Activated CD4-positive, alpha-beta T cell treated with anti-CD3 and anti-CD28 coated beads for 36 hours (primary cell): ENCODE measurements at regions of chr22 and their contacts with region 1.

Region 1: DNA sequence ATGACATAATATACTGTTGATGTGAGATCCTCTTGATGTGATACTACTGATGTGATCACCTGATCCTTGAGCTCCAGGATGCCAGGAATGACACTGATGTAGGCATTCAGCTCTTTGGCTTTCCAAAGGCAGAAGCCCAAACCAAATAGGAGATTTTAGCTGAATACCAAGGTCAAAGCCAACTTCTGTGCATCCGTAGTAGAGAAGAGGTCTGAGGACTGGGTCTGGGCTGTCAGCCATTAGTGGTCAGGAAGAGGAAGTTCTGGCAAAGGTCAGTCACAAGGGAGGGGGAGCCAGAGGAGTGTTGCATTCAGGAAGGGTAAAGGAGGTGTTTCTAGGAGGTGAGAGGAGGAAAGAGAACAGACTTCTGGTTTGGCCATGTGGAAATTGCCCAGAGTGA is 53.4 kb upstream of the PARVG start:
- DNase-seq: no peak
- ATAC-seq: no peak
- H3K4me3 Mint-ChIP-seq: no peak overlapping the region
- H3K27ac Mint-ChIP-seq: no peak overlapping the region
- H3K4me1 Mint-ChIP-seq: no peaks in the 10 kb centered on the region
- H3K27me3 Mint-ChIP-seq: peaks cover 2% of the 10 kb centered on the region

Region 2: DNA sequence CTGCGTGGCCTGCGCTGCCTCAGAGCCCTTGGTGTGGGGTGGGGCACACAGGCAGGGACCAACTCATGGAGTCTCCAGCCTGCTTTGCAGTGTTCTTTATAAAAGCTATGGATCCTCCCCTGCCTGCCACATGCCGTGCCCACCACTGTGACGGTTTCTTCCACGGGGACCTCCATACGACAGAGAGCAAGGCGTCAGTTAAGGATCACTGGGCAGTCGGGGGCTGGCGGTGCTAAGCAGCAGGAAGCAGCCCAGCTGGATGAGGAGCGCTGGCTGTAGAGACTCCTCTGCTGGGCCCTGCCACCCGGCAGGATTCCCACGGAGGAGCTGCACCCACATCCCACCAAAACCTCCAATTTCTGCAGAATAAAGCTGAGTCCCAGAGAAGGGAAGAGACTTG is 292.2 kb before region 1 on chr22:
- CTCF ChIA-PET with region 1: no interaction called
- POLR2A ChIA-PET with region 1: interaction called, 11 read pairs
- intact Hi-C with region 1: no loop called
- DNase-seq: no peak
- ATAC-seq: no peak
- H3K4me3 Mint-ChIP-seq: no peak overlapping the region
- H3K27ac Mint-ChIP-seq: no peak overlapping the region
- H3K4me1 Mint-ChIP-seq: no peaks in the 10 kb centered on the region
- H3K27me3 Mint-ChIP-seq: peaks cover 2% of the 10 kb centered on the region

Region 3: DNA sequence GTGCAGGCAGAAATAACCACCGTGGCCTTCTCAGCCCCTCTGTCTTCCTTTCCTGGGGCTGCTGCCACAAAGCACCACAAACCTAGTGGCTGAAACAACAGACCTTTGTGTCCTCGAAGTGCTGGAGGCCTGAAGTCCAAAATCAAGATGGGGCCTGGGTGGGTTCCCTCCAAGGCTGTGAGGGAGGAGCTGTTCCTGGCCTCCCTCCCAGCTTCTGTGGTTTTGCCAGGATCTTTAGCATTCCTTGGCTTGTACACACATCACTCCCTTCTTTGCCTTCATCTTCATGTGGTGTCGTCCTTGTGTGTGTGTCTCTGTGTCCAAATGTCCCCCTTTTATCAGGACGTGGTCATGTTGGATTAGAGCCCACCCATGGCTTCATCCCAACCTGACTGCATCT is 24.3 kb after region 1 on chr22:
- CTCF ChIA-PET with region 1: no interaction called
- POLR2A ChIA-PET with region 1: no interaction called
- intact Hi-C with region 1: no loop called
- DNase-seq: no peak
- ATAC-seq: no peak
- H3K4me3 Mint-ChIP-seq: no peak overlapping the region
- H3K27ac Mint-ChIP-seq: no peak overlapping the region
- H3K4me1 Mint-ChIP-seq: no peaks in the 10 kb centered on the region
- H3K27me3 Mint-ChIP-seq: no peaks in the 10 kb centered on the region